ENCODE measurements at regions of chr12 and their contacts with region 1.

Region 1: GRCh38 chr12:49828133-49829091 is at the start of gene NCKAP5L:
- DNase-seq: peak; percentile 97
- H3K4me3 ChIP-seq: peak within 1 kb of the TSS; percentile 85
- H3K4me3 Mint-ChIP-seq: peak within 1 kb of the TSS; percentile 78
- H3K27ac Mint-ChIP-seq: peak within 1 kb of the TSS; percentile 74
- H3K4me1 ChIP-seq: peaks cover 6% of the 10 kb centered on the region; the same call in 1 of the 2 replicates
- H3K4me1 Mint-ChIP-seq: peaks cover 17% of the 10 kb centered on the region
- H3K27me3 ChIP-seq: no peaks in the 10 kb centered on the region
- H3K27me3 Mint-ChIP-seq: no peaks in the 10 kb centered on the region
- CTCF ChIP-seq: no peak
- total RNA-seq, gene NCKAP5L: 17.8 and 19.5 TPM in 2 replicates

Region 2: DNA sequence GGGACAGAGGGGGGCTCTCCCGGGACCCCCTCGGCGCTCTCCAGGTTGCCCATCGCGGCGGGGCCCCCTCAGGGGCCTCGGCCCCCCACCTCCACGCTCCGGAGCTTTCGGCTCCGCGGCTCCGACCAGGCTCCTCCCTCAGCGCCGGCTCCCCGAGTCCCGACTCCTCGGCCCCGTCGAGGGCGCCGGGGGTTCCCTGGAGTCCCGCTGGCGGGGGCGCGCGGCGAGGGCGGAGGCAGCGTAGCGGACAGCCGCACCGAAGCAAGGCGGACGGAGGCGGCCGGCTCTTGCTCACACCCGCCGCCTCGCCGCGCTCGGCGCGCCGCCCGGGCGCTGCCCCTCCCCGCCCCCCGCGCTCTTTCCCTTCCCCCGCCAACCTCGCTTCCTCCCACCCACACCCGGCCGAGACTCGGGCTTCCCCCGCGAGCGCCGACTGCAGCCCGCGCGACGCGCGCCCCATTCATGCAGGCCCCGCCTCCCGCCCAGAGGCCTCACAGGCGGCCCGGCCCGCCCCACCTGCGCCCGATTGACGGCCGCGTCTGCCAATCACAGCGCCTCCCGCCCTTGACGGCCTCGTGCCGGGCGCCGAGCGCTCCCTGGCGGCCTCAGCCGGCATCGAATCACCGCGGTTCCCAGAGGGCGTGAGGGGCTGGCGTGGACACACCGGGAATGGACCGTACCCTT is 121.1 kb before region 1 on chr12 and contains the start of gene FMNL3:
- CTCF ChIA-PET with region 1: no interaction called
- POLR2A ChIA-PET with region 1: no interaction called
- intact Hi-C with region 1: loop called (anchors 1 kb)
- DNase-seq: peak; percentile 96 to 100
- H3K4me3 ChIP-seq: peak within 1 kb of the TSS; percentile 76
- H3K4me3 Mint-ChIP-seq: peak within 1 kb of the TSS; percentile 83
- H3K27ac Mint-ChIP-seq: peak within 1 kb of the TSS; percentile 3
- H3K4me1 ChIP-seq: peaks cover 5% of the 10 kb centered on the region; the same call in 1 of the 2 replicates
- H3K4me1 Mint-ChIP-seq: peaks cover 6% of the 10 kb centered on the region
- H3K27me3 ChIP-seq: no peaks in the 10 kb centered on the region
- H3K27me3 Mint-ChIP-seq: peaks cover 13% of the 10 kb centered on the region
- CTCF ChIP-seq: peak; percentile 95 to 96
- total RNA-seq, gene FMNL3: 9.2 and 10.7 TPM in 2 replicates

Region 3: GRCh38 chr12:49842519-49843352 is 14.3 kb after region 1 on chr12 and contains the start of gene BCDIN3D:
- CTCF ChIA-PET with region 1: interaction called, 5 read pairs
- POLR2A ChIA-PET with region 1: interaction called, 9 read pairs
- intact Hi-C with region 1: loop called (anchors 1 kb)
- DNase-seq: peak; percentile 94
- H3K4me3 ChIP-seq: peak within 1 kb of the TSS; percentile 59
- H3K4me3 Mint-ChIP-seq: peak within 1 kb of the TSS; percentile 93
- H3K27ac Mint-ChIP-seq: peak within 1 kb of the TSS; percentile 92
- H3K4me1 ChIP-seq: peaks cover 7% of the 10 kb centered on the region; the same call in 1 of the 2 replicates
- H3K4me1 Mint-ChIP-seq: peaks cover 24% of the 10 kb centered on the region
- H3K27me3 ChIP-seq: no peaks in the 10 kb centered on the region
- H3K27me3 Mint-ChIP-seq: no peaks in the 10 kb centered on the region
- CTCF ChIP-seq: no peak
- total RNA-seq, gene BCDIN3D: 5.7 and 6.6 TPM in 2 replicates

Region 4: GRCh38 chr12:49873361-49873934 is 45.0 kb after region 1 on chr12:
- CTCF ChIA-PET with region 1: no interaction called
- POLR2A ChIA-PET with region 1: no interaction called
- intact Hi-C with region 1: no loop called
- DNase-seq: no peak
- H3K4me3 ChIP-seq: no peak overlapping the region
- H3K4me3 Mint-ChIP-seq: no peak overlapping the region
- H3K27ac Mint-ChIP-seq: no peak overlapping the region
- H3K4me1 ChIP-seq: peaks cover 23% of the 10 kb centered on the region
- H3K4me1 Mint-ChIP-seq: peaks cover 13% of the 10 kb centered on the region
- H3K27me3 ChIP-seq: no peaks in the 10 kb centered on the region
- H3K27me3 Mint-ChIP-seq: no peaks in the 10 kb centered on the region
- CTCF ChIP-seq: no peak

Region 5: GRCh38 chr12:49920241-49920921 is 92.0 kb after region 1 on chr12:
- CTCF ChIA-PET with region 1: no interaction called
- POLR2A ChIA-PET with region 1: no interaction called
- intact Hi-C with region 1: no loop called
- DNase-seq: no peak
- H3K4me3 ChIP-seq: no peak overlapping the region
- H3K4me3 Mint-ChIP-seq: no peak overlapping the region
- H3K27ac Mint-ChIP-seq: no peak overlapping the region
- H3K4me1 ChIP-seq: no peaks in the 10 kb centered on the region
- H3K4me1 Mint-ChIP-seq: no peaks in the 10 kb centered on the region
- H3K27me3 ChIP-seq: no peaks in the 10 kb centered on the region
- H3K27me3 Mint-ChIP-seq: no peaks in the 10 kb centered on the region
- CTCF ChIP-seq: no peak

Region 6: GRCh38 chr12:51326762-51327439 is 1498.5 kb after region 1 on chr12:
- CTCF ChIA-PET with region 1: no interaction called
- POLR2A ChIA-PET with region 1: no interaction called
- intact Hi-C with region 1: no loop called
- DNase-seq: peak in 1 of 2 experiments; percentile 67
- H3K4me3 ChIP-seq: no peak overlapping the region
- H3K4me3 Mint-ChIP-seq: peak overlapping the region; percentile 3
- H3K27ac Mint-ChIP-seq: peak overlapping the region; percentile 85
- H3K4me1 ChIP-seq: peaks cover 26% of the 10 kb centered on the region
- H3K4me1 Mint-ChIP-seq: peaks cover 37% of the 10 kb centered on the region
- H3K27me3 ChIP-seq: no peaks in the 10 kb centered on the region
- H3K27me3 Mint-ChIP-seq: no peaks in the 10 kb centered on the region
- CTCF ChIP-seq: no peak